Right ventricle myocardium inferior (tissue), 1 donor: ENCODE measurements at regions of chr11 and their contacts with region 1.

Region 1: DNA sequence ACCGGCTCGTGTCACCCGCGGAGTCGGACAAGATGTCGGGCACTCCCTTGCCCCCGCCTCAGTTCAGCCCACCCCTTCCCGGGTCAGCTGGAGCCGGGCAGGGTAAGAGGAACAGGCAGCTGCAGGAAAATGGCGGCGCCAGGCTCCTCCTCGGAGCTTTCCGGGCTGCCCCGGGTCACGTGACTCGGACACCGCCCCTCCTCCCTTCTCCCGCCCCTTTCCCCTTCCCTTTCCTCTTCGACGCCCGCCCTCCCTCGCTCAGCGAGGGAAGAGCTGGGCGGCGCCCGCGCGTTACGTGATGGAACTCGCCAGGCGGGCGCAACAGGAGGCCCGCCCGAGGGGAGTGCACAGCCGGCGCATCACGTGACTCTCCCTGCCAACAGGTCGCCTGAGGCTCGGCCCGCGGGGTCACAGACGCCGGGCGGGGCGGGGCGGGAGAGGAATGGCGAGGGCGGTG is at the start of gene PICALM:
- DNase-seq: peak; percentile 99
- ATAC-seq: peak; percentile 98
- total RNA-seq, gene PICALM: 126 TPM

Region 2: GRCh38 chr11:85652786-85653447 is 416.1 kb before region 1 on chr11:
- intact Hi-C with region 1: loop called (anchors 10 kb)
- DNase-seq: no peak
- ATAC-seq: no peak

Region 3: DNA sequence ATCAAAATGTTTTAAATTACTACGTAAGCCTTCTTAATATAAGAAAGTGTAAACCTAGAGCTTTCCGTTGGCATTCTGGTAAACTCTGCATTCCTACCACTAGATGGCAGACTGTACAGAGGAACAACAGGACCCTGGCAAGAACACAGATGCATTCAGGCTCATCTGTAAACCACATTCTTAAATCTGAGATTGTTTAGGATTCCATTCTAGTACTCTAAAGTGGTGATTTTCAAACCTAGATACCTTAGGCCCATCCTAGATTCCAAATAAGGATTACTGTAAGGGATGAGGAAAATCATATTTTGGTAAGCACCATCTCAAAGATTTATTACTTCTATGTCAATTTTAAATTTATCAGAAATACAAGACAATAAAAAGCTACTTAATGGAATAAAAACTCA is 27.0 kb before region 1 on chr11:
- intact Hi-C with region 1: loop called (anchors 1 kb)
- DNase-seq: no peak
- ATAC-seq: peak; percentile 80

Region 4: GRCh38 chr11:86174101-86175046 is 105.4 kb after region 1 on chr11:
- intact Hi-C with region 1: loop called (anchors 1 kb)
- DNase-seq: peak; percentile 86
- ATAC-seq: peak; percentile 94

Region 5: GRCh38 chr11:86193297-86194095 is 124.5 kb after region 1 on chr11:
- intact Hi-C with region 1: loop called (anchors 1 kb)
- DNase-seq: peak; percentile 74
- ATAC-seq: peak; percentile 98